Activated B cell treated with CpG ODN at 0.5 μM for 24 hours (primary cell): ENCODE measurements at regions of chr1 and their contacts with region 1.

Region 1: DNA sequence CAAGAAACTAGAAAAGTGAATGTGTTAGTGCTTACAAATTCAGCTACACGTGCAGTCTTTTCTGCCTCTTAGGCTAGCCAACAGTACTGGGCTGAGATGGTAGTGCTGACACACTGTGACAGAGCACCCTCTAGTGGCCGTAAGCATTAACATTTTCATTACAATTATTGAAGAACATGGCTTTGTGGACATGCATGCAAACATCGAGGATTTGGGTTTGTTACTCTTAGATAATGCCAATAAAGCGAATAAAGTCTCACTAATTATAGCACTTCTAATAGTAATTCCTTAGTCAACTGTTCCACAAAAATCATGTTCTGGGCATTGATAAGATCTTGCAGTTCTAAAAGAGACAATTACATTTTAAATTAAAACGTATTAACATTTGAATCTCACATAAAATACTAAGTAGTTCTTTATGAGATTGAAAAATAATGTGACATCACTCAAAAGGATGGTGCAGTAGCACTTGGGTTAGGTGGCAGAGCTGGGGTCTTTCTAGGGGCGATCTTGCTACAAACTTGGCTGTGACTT is 47.1 kb downstream of the MYSM1 start:
- DNase-seq: no peak
- ATAC-seq: peak; percentile 75
- H3K4me3 Mint-ChIP-seq: no peak overlapping the region
- H3K27ac Mint-ChIP-seq: no peak overlapping the region
- H3K4me1 Mint-ChIP-seq: peaks cover 3% of the 10 kb centered on the region
- H3K27me3 Mint-ChIP-seq: no peaks in the 10 kb centered on the region
- CTCF ChIP-seq: peak; percentile 68

Region 2: DNA sequence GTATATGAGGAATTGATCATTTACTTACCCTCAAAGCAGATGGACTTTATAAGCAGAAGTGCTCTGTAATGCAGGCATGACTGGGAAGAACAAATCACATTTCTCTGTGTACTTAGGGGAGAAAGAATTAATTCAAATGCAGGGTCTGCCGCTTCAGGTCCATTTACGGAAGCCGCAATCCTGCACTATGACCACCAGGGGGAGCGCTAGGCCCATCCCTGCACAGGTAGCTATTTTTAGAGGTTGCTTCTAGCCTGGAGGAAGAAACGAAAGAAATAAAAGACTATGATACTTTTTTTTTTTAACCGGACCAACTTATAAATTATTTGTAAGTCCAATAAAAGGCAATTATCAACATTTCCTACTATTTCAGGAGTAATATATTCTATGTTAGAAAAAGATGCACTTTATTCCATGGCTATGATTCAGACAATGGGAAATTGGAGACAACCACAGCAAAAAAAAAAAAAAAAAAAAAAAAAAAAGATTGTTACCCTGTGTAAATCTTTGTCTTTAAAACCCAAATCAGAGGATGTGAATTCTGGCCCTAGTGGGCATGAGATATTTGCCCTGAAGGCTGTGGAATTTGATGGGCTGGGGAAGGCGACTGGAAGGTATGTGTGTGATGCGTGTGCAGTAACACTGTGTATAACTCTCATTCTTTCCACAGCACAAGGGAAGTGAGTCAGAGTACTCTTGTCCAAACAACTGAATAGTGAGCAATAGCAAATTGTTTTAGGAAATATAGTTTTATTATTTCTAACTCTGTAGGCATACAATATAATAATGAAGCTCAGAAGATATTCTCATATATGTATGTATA is 1820.6 kb before region 1 on chr1:
- CTCF ChIA-PET with region 1: interaction called, 14 read pairs
- POLR2A ChIA-PET with region 1: no interaction called
- intact Hi-C with region 1: no loop called
- DNase-seq: peak; percentile 34
- ATAC-seq: peak; percentile 47
- H3K4me3 Mint-ChIP-seq: no peak overlapping the region
- H3K27ac Mint-ChIP-seq: no peak overlapping the region
- H3K4me1 Mint-ChIP-seq: peaks cover 5% of the 10 kb centered on the region
- H3K27me3 Mint-ChIP-seq: peaks cover 11% of the 10 kb centered on the region
- CTCF ChIP-seq: peak; percentile 96

Region 3: GRCh38 chr1:58013237-58013636 is 639.5 kb before region 1 on chr1:
- CTCF ChIA-PET with region 1: no interaction called
- POLR2A ChIA-PET with region 1: no interaction called
- intact Hi-C with region 1: no loop called
- DNase-seq: no peak
- ATAC-seq: no peak
- H3K4me3 Mint-ChIP-seq: no peak overlapping the region
- H3K27ac Mint-ChIP-seq: no peak overlapping the region
- H3K4me1 Mint-ChIP-seq: no peaks in the 10 kb centered on the region
- H3K27me3 Mint-ChIP-seq: no peaks in the 10 kb centered on the region
- CTCF ChIP-seq: no peak

Region 4: DNA sequence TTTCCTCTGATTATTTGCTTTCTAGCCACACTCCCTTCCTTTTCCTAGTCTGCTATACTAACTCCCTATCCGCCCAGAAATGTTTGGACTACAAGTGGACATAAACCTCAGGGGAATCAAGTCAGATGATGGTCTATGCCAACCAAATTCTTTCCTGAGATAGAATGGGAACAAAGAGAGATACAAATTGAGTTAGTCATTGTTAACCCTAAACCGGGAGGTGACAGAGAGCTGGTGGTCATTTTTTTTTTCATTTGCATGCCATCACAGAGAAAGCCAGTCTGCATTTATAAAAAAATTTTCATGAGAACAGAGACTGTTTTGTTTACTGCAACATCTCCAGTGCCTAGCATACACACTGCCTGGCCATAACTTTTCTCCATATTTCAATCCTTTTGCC is 12.2 kb after region 1 on chr1:
- CTCF ChIA-PET with region 1: interaction called, 10 read pairs
- POLR2A ChIA-PET with region 1: no interaction called
- intact Hi-C with region 1: no loop called
- DNase-seq: no peak
- ATAC-seq: no peak
- H3K4me3 Mint-ChIP-seq: no peak overlapping the region
- H3K27ac Mint-ChIP-seq: no peak overlapping the region
- H3K4me1 Mint-ChIP-seq: no peaks in the 10 kb centered on the region
- H3K27me3 Mint-ChIP-seq: no peaks in the 10 kb centered on the region
- CTCF ChIP-seq: no peak

Region 5: DNA sequence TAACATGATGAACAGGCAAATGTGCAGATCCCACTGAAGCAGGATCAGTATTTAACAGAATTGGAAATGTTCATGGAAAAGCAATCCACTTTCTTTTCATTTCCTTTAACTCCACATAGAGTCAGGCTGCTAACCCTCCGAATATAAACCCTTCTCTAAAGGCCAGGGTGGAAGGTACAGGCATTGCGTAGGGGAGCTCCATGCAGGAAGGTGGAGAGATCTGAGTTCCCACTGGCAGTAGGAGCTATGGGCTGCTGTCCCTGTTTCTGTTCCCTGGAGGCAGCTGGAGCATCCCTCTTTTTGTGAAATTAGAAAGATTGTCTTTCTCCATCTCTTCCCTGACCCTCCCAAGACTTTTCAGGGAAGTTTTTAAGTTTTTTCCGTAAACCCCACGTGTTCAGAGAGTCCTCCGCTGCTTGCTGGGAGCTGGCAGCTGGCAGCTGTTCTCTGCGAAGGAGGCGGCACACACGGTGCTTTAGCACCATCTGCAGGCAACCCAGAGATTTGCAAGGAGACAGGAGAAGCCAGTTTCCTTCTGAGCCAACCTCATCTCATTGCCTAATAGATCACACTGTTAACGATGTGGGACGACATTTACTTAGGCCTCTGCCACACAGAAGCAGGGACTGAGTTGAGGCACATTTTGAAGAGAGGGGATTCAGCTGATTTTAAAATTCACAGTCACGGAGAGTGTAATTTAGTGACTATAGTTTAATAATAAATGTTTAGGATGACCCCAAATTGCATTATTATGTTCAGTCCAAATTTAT is 1106.6 kb after region 1 on chr1:
- CTCF ChIA-PET with region 1: interaction called, 7 read pairs
- POLR2A ChIA-PET with region 1: no interaction called
- intact Hi-C with region 1: loop called (anchors 1 kb)
- DNase-seq: peak; percentile 50
- ATAC-seq: peak; percentile 93
- H3K4me3 Mint-ChIP-seq: peak overlapping the region; percentile 35
- H3K27ac Mint-ChIP-seq: no peak overlapping the region
- H3K4me1 Mint-ChIP-seq: peaks cover 4% of the 10 kb centered on the region
- H3K27me3 Mint-ChIP-seq: no peaks in the 10 kb centered on the region
- CTCF ChIP-seq: peak; percentile 96